ENCODE measurements at regions of chr3 and their contacts with region 1.

Region 1: DNA sequence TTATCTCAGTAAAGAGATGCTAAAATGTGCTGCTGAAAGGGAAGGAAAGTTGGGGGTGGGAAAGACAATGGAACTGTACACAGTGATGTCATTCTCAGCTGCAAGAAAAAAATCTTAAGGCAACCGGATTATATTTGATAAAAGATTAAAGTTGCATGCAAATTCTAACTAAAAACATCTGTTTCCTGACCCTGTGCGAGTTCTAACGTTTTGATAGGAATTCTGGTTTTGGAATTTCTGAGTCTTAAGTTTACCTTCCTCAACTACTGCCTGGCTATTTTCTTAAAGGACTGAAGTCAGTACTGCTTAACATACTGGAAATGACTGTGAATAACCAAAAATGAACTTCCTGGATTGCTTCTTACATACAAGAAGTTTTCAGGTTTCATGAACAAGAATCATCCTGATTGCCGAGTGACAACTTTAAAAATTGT is 115.5 kb downstream of the SLC25A26 start:
- DNase-seq: peak; percentile 96
- H3K4me3 ChIP-seq: peak overlapping the region in 1 of 3 experiments; percentile 5
- H3K27ac ChIP-seq: peak overlapping the region; percentile 85
- H3K4me1 ChIP-seq: peaks cover 31% of the 10 kb centered on the region
- H3K27me3 ChIP-seq: no peaks in the 10 kb centered on the region
- CTCF ChIP-seq: no peak
- POLR2A ChIP-seq: no peak

Region 2: DNA sequence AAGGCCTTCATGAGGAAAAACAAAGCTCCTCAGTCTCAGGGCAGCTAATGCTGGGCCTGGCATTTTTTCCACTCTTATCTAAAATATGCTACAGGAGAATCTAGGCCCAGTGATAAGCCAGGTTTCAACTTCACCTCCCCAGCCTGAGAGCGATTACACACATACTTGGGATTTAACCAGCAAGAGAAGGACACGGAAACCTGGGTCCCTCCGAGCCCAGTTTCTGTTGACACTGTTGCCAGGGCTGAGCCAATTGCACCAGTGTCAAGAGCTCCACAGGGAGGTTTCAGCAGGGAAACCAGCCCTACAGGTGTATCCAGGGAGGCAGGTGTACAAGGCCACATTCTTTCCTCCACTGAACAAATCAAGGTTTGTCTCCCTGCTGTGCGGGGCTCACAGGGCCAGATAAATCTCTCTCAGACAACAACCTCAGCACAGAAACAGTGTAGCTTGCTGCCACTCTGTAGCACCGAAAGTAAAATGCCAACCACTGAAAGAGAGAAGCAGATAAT is 383.0 kb before region 1 on chr3:
- CTCF ChIA-PET with region 1: no interaction called
- POLR2A ChIA-PET with region 1: no interaction called
- dilution Hi-C with region 1: no loop called
- intact Hi-C with region 1: no loop called
- DNase-seq: peak; percentile 52
- H3K4me3 ChIP-seq: no peak overlapping the region
- H3K27ac ChIP-seq: peak overlapping the region; percentile 70
- H3K4me1 ChIP-seq: peaks cover 83% of the 10 kb centered on the region
- H3K27me3 ChIP-seq: no peaks in the 10 kb centered on the region
- CTCF ChIP-seq: no peak
- POLR2A ChIP-seq: no peak

Region 3: GRCh38 chr3:66317750-66318376 is 18.5 kb before region 1 on chr3:
- CTCF ChIA-PET with region 1: interaction called, 3 read pairs
- POLR2A ChIA-PET with region 1: no interaction called
- dilution Hi-C with region 1: no loop called
- intact Hi-C with region 1: loop called (anchors 1 kb)
- DNase-seq: no peak
- H3K4me3 ChIP-seq: no peak overlapping the region
- H3K27ac ChIP-seq: no peak overlapping the region
- H3K4me1 ChIP-seq: no peaks in the 10 kb centered on the region
- H3K27me3 ChIP-seq: no peaks in the 10 kb centered on the region
- CTCF ChIP-seq: no peak
- POLR2A ChIP-seq: no peak

Region 4: DNA sequence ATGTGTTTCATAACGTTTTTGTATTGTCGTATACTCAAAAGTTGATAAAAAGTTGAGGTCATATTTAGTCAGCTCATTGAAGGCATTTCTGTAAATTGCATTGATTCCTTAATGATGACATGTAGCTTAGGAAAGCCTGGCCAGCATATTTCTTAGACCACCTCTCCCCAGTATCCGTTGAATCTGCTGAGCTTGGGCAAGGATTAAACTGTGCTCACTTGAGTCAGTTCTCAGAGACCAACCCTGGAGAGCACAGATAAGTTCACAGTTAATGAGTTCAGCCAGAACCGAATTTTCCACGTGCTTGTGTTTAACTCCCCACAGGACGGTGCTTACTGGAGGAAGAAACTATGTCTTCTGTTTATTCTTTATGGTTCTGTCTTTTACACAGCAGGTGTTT is 17.2 kb after region 1 on chr3:
- CTCF ChIA-PET with region 1: no interaction called
- POLR2A ChIA-PET with region 1: no interaction called
- dilution Hi-C with region 1: no loop called
- intact Hi-C with region 1: loop called (anchors 1 kb)
- DNase-seq: no peak
- H3K4me3 ChIP-seq: no peak overlapping the region
- H3K27ac ChIP-seq: peak overlapping the region; percentile 72
- H3K4me1 ChIP-seq: peaks cover 16% of the 10 kb centered on the region
- H3K27me3 ChIP-seq: no peaks in the 10 kb centered on the region
- CTCF ChIP-seq: no peak
- POLR2A ChIP-seq: no peak

Region 5: GRCh38 chr3:66450390-66451022 is 114.2 kb after region 1 on chr3:
- CTCF ChIA-PET with region 1: no interaction called
- POLR2A ChIA-PET with region 1: no interaction called
- dilution Hi-C with region 1: no loop called
- intact Hi-C with region 1: no loop called
- DNase-seq: peak; percentile 91
- H3K4me3 ChIP-seq: no peak overlapping the region
- H3K27ac ChIP-seq: peak overlapping the region; percentile 18
- H3K4me1 ChIP-seq: peaks cover 11% of the 10 kb centered on the region
- H3K27me3 ChIP-seq: no peaks in the 10 kb centered on the region
- CTCF ChIP-seq: no peak
- POLR2A ChIP-seq: no peak

Measured in endothelial cell of umbilical vein (primary cell).